ENCODE measurements at regions of chr9 and their contacts with region 1.

Region 1: GRCh38 chr9:38107811-38108304 is 38.8 kb upstream of the SHB start:
- DNase-seq: no peak
- ATAC-seq: no peak

Region 2: DNA sequence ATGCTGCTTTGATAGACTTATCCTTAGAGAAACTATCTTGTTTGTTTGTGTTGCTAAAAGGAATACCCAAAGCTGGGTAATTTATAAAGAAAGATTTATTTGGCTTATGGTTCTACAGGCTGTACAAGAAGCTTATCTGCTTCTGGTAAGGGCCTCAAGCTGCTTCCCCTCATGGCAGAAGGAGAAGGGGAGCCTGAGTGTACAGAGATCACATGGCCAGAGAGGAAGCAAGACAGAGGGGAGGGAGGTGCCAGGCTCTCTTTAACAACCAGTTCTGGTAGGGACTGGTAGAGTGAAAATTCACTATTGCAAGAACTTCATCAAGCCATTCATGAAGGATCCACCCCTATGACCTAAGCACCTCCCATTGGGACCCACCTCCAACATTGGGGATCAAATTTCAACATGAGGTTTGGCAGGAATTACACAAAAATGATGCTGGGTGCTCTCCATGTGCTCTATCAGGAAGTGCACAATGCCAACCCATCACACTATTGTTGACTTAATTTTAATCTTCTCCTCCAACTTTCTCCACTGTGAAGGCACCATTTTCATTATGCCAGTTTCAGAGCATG is 76.2 kb after region 1 on chr9:
- intact Hi-C with region 1: loop called (anchors 10 kb)
- DNase-seq: no peak
- ATAC-seq: no peak

Measured in Right ventricle myocardium superior (tissue), 1 donor.